Tibial artery (tissue), 4 donors: ENCODE measurements at regions of chr18 and their contacts with region 1.

Region 1: DNA sequence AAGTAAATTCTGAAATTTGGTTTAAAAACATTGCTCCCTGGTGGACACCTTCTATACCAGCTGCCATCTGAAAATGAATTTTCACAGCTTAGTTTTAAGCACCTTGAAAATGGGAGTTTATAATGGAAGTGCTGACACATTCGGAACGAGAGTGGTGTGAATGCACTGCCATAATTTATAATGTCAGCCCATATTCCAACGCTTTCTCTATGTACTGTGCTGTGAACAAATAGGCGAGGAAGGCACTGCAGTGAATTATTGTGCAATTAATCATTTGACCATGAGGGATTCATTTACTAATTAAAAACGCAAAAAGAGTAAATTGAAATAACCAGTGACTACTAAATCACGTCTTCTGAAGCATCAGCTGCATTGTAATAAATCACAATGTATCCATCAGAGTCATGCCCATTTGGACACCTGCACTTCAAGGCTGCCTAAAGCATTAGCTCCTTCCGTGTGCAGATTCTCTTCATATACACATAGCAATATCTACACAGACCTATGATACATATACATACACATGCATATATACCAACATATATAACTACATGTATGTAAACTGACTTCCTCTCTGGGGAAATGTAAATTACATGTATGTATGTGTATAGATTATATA is 699.8 kb downstream of the GALR1 start:
- DNase-seq: no peak
- H3K4me3 ChIP-seq: no peak overlapping the region
- H3K27ac ChIP-seq: no peak overlapping the region
- H3K4me1 ChIP-seq: no peaks in the 10 kb centered on the region
- H3K27me3 ChIP-seq: no peaks in the 10 kb centered on the region
- CTCF ChIP-seq: no peak

Region 2: GRCh38 chr18:78494204-78495085 is 545.0 kb after region 1 on chr18:
- intact Hi-C with region 1: loop called (anchors 5 kb)
- DNase-seq: no peak
- H3K4me3 ChIP-seq: no peak overlapping the region
- H3K27ac ChIP-seq: no peak overlapping the region
- H3K4me1 ChIP-seq: no peaks in the 10 kb centered on the region
- H3K27me3 ChIP-seq: no peaks in the 10 kb centered on the region
- CTCF ChIP-seq: no peak